Activated B cell treated with CpG ODN at 0.5 μM for 24 hours (primary cell): ENCODE measurements at regions of chr12 and their contacts with region 1.

Region 1: GRCh38 chr12:46473634-46474329 is 101.2 kb upstream of the SLC38A2 start:
- DNase-seq: no peak
- ATAC-seq: peak; percentile 72
- H3K4me3 Mint-ChIP-seq: peak overlapping the region; percentile 77
- H3K27ac Mint-ChIP-seq: peak overlapping the region; percentile 75
- H3K4me1 Mint-ChIP-seq: peaks cover 23% of the 10 kb centered on the region
- H3K27me3 Mint-ChIP-seq: no peaks in the 10 kb centered on the region
- CTCF ChIP-seq: no peak

Region 2: DNA sequence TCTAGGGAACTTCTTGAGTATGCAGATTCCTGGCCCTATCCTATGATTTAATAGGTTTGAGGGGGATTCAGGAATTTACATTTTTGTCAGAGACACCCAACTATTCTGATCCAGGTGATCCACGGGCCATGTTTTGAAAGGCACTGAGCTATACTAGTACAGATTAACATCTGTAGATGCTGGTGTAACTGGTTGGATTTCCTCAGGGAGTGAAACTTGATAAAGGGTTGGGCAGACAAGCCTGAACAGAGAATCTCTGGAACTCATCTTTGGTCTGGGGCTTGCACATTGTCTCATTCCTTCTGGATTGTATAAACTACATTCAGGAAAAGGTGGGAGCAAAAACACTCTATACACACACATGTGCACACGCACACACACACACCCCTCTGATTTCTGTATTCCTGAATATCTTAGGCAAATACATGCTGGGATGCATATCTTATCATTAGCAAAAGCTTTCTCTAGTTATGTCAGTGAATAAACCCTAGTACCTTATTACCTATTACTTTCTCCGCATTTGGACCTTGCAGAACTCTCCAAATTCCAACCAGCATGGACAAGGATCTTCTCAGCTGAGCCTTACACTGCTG is 309.5 kb before region 1 on chr12:
- CTCF ChIA-PET with region 1: no interaction called
- POLR2A ChIA-PET with region 1: no interaction called
- intact Hi-C with region 1: no loop called
- DNase-seq: no peak
- ATAC-seq: no peak
- H3K4me3 Mint-ChIP-seq: no peak overlapping the region
- H3K27ac Mint-ChIP-seq: no peak overlapping the region
- H3K4me1 Mint-ChIP-seq: peaks cover 11% of the 10 kb centered on the region
- H3K27me3 Mint-ChIP-seq: no peaks in the 10 kb centered on the region
- CTCF ChIP-seq: no peak

Region 3: GRCh38 chr12:46388427-46389021 is 85.3 kb before region 1 on chr12:
- CTCF ChIA-PET with region 1: no interaction called
- POLR2A ChIA-PET with region 1: interaction called, 9 read pairs
- intact Hi-C with region 1: loop called (anchors 1 kb)
- DNase-seq: no peak
- ATAC-seq: peak; percentile 66
- H3K4me3 Mint-ChIP-seq: peak overlapping the region; percentile 69
- H3K27ac Mint-ChIP-seq: peak overlapping the region; percentile 91
- H3K4me1 Mint-ChIP-seq: peaks cover 83% of the 10 kb centered on the region
- H3K27me3 Mint-ChIP-seq: no peaks in the 10 kb centered on the region
- CTCF ChIP-seq: no peak

Region 4: GRCh38 chr12:46459861-46460545 is 13.8 kb before region 1 on chr12:
- CTCF ChIA-PET with region 1: no interaction called
- POLR2A ChIA-PET with region 1: interaction called, 12 read pairs
- intact Hi-C with region 1: loop called (anchors 2 kb)
- DNase-seq: peak; percentile 18
- ATAC-seq: peak; percentile 64
- H3K4me3 Mint-ChIP-seq: peak overlapping the region; percentile 84
- H3K27ac Mint-ChIP-seq: peak overlapping the region; percentile 93
- H3K4me1 Mint-ChIP-seq: peaks cover 67% of the 10 kb centered on the region
- H3K27me3 Mint-ChIP-seq: no peaks in the 10 kb centered on the region
- CTCF ChIP-seq: no peak